Heart left ventricle (tissue), 16 donors: ENCODE measurements at regions of chr2 and their contacts with region 1.

Region 1: GRCh38 chr2:73985308-73986084 is 786 bp downstream of the TET3 start:
- DNase-seq: peak in 4 of 5 donors; percentile 53 to 77 (median 56)
- ATAC-seq: peak in 3 of 4 donors; percentile 5 to 11 (median 11)
- H3K4me3 ChIP-seq: peak overlapping the region; percentile 31 to 71 (median 60)
- H3K27ac ChIP-seq: peak overlapping the region in 10 of 12 donors; percentile 46 to 95 (median 64)
- H3K4me1 ChIP-seq: peaks cover 0 to 84% (median 51%) of the 10 kb centered on the region in 12 donors
- H3K27me3 ChIP-seq: no peaks in the 10 kb centered on the region
- CTCF ChIP-seq: no peak
- POLR2A ChIP-seq: peak in 1 of 2 donors; percentile 38

Region 2: GRCh38 chr2:73931531-73932500 is 53.7 kb before region 1 on chr2:
- intact Hi-C with region 1: loop called in 8 of 10 experiments (anchors 2 to 10 kb)
- DNase-seq: no peak
- ATAC-seq: peak in 1 of 4 donors; percentile 28
- H3K4me3 ChIP-seq: no peak overlapping the region
- H3K27ac ChIP-seq: no peak overlapping the region
- H3K4me1 ChIP-seq: peaks cover 0 to 73% (median 25%) of the 10 kb centered on the region in 12 donors
- H3K27me3 ChIP-seq: no peaks in the 10 kb centered on the region
- CTCF ChIP-seq: no peak
- POLR2A ChIP-seq: no peak

Region 3: DNA sequence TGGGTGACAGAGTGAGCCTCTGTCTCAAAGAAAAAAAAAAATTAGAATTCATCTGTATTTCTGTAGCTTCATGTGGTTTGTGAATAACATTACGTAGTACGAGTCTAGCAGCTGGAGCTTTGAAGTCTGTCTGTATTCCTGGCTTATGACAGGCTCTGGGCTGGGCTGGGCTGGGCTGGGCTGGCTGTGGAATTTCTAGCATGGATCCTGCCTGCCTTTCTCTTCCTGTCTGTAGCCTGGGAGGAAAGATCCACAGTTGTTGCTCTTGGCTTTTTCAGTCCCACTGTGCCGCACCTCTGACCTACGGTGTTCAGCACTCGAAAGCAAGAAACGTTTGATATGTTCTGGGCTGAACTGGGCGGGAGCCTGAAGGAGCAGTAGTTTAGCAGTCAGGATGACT is 106.8 kb after region 1 on chr2:
- intact Hi-C with region 1: loop called in 1 of 10 experiments (anchors 10 kb)
- DNase-seq: no peak
- ATAC-seq: peak in 1 of 4 donors; percentile 16
- H3K4me3 ChIP-seq: no peak overlapping the region
- H3K27ac ChIP-seq: no peak overlapping the region
- H3K4me1 ChIP-seq: no peaks in the 10 kb centered on the region
- H3K27me3 ChIP-seq: no peaks in the 10 kb centered on the region
- CTCF ChIP-seq: no peak
- POLR2A ChIP-seq: no peak

Region 4: GRCh38 chr2:74119912-74120825 is 134.7 kb after region 1 on chr2:
- intact Hi-C with region 1: loop called in 1 of 10 experiments (anchors 5 kb)
- DNase-seq: peak; percentile 81 to 90 (median 88)
- ATAC-seq: peak; percentile 88 to 100 (median 99)
- H3K4me3 ChIP-seq: peak overlapping the region; percentile 55 to 86 (median 68)
- H3K27ac ChIP-seq: peak overlapping the region in 11 of 12 donors; percentile 41 to 90 (median 78)
- H3K4me1 ChIP-seq: peaks cover 0 to 13% (median 2%) of the 10 kb centered on the region in 12 donors
- H3K27me3 ChIP-seq: no peaks in the 10 kb centered on the region
- CTCF ChIP-seq: peak; percentile 17 to 87 (median 58)
- POLR2A ChIP-seq: no peak